ENCODE measurements at regions of chr16 and their contacts with region 1.

Region 1: DNA sequence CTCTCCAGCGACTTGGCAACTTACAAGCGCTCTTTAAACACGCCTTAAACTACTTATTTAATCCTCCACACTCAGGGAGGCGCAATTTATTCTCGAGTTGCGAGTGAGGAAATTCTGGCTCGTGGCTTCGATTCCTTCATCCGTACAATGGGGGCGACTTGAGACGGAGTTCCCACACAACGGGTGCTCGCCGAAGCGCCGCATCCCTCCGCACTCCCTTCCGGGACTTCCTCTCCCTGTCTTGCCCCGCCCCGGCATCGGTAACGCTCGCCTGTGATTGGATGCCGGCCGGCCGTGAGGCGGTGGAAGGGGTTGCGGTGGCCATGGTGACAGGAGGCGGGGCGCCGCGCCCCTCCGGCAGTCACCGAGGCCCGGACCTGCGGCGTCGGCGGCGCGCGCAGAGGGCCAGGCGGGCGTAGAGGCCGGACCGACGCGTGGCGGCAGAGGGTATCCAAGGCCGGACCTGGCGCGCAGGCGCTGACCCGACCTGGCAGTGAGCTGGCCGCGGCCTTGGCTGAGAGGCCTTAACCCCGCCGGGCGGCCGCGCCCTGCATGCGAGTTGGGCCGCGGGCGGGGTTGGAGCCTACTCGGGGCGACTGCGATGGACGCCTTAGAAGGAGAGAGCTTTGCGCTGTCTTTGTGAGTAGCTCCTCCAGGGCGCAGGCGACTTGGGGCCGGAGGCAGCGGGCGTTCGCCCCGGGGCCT is at the start of gene ARL2BP:
- DNase-seq: peak; percentile 94 to 98 (median 95)
- H3K4me3 ChIP-seq: peak within 1 kb of the TSS; percentile 49 to 60
- H3K4me3 Mint-ChIP-seq: peak within 1 kb of the TSS; percentile 91 to 98 (median 95)
- H3K27ac ChIP-seq: peak within 1 kb of the TSS; percentile 78
- H3K27ac Mint-ChIP-seq: peak within 1 kb of the TSS; percentile 93 to 99 (median 98)
- H3K4me1 ChIP-seq: peaks cover 17% of the 10 kb centered on the region
- H3K4me1 Mint-ChIP-seq: peaks cover 13 to 21% (median 18%) of the 10 kb centered on the region in 4 donors
- H3K27me3 ChIP-seq: no peaks in the 10 kb centered on the region
- H3K27me3 Mint-ChIP-seq: no peaks in the 10 kb centered on the region
- total RNA-seq, gene ARL2BP: 48.0 to 49.1 TPM

Region 2: GRCh38 chr16:57084257-57084770 is 160.6 kb before region 1 on chr16:
- CTCF ChIA-PET with region 1: no interaction called
- POLR2A ChIA-PET with region 1: no interaction called
- intact Hi-C with region 1: no loop called
- DNase-seq: peak; percentile 78 to 81 (median 79)
- H3K4me3 ChIP-seq: no peak overlapping the region
- H3K4me3 Mint-ChIP-seq: peak overlapping the region in 1 of 8 donors; percentile 30
- H3K27ac ChIP-seq: peak overlapping the region; percentile 29
- H3K27ac Mint-ChIP-seq: peak overlapping the region; percentile 85 to 95 (median 91)
- H3K4me1 ChIP-seq: peaks cover 10% of the 10 kb centered on the region
- H3K4me1 Mint-ChIP-seq: peaks cover 5 to 18% (median 11%) of the 10 kb centered on the region in 4 donors
- H3K27me3 ChIP-seq: no peaks in the 10 kb centered on the region
- H3K27me3 Mint-ChIP-seq: no peaks in the 10 kb centered on the region

Region 3: DNA sequence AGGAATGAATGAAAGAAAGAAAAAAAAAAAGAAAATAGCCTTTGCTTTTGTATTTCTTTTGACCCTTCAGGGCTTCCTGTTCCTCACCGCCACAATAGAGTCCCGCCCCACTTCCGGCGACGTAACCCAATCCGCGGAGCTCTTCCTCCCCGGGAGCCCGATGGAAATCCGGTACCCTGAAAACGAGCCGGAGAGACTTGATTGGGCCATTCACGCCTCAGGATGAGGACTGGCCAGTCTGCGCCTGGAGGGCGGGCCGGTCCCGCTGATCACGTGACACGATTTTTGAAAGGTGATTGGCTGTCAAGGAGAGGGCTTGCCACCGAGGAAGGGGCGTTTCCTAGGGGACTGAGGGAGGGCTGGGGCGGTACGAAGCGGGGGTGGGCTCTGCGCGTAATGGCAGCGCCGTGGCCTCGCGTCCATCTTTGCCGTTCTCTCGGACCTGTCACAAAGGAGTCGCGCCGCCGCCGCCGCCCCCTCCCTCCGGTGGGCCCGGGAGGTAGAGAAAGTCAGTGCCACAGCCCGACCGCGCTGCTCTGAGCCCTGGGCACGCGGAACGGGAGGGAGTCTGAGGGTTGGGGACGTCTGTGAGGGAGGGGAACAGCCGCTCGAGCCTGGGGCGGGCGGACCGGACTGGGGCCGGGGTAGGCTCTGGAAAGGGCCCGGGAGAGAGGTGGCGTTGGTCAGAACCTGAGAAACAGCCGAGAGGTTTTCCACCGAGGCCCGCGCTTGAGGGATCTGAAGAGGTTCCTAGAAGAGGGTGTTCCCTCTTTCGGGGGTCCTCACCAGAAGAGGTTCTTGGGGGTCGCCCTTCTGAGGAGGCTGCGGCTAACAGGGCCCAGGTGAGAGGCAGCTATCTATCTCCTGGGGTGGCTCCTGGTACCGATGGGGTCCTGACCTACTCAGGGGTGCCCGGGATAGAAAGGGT is 58.7 kb before region 1 on chr16 and contains the starts of genes PSME3IP1 and RSPRY1:
- CTCF ChIA-PET with region 1: interaction called, 3 read pairs
- POLR2A ChIA-PET with region 1: interaction called, 10 read pairs
- intact Hi-C with region 1: loop called (anchors 1 kb)
- DNase-seq: peak; percentile 99 to 100 (median 100)
- H3K4me3 ChIP-seq: peak within 1 kb of the TSS; percentile 88
- H3K4me3 Mint-ChIP-seq: peak within 1 kb of the TSS; percentile 97 to 99 (median 99)
- H3K27ac ChIP-seq: peak within 1 kb of the TSS; percentile 87
- H3K27ac Mint-ChIP-seq: peak within 1 kb of the TSS; percentile 95 to 99 (median 97)
- H3K4me1 ChIP-seq: peaks cover 45% of the 10 kb centered on the region
- H3K4me1 Mint-ChIP-seq: peaks cover 36 to 60% (median 48%) of the 10 kb centered on the region in 4 donors
- H3K27me3 ChIP-seq: no peaks in the 10 kb centered on the region
- H3K27me3 Mint-ChIP-seq: no peaks in the 10 kb centered on the region
- total RNA-seq, gene PSME3IP1: 147 to 157 TPM
- total RNA-seq, gene RSPRY1: 32.8 to 38.0 TPM

Region 4: DNA sequence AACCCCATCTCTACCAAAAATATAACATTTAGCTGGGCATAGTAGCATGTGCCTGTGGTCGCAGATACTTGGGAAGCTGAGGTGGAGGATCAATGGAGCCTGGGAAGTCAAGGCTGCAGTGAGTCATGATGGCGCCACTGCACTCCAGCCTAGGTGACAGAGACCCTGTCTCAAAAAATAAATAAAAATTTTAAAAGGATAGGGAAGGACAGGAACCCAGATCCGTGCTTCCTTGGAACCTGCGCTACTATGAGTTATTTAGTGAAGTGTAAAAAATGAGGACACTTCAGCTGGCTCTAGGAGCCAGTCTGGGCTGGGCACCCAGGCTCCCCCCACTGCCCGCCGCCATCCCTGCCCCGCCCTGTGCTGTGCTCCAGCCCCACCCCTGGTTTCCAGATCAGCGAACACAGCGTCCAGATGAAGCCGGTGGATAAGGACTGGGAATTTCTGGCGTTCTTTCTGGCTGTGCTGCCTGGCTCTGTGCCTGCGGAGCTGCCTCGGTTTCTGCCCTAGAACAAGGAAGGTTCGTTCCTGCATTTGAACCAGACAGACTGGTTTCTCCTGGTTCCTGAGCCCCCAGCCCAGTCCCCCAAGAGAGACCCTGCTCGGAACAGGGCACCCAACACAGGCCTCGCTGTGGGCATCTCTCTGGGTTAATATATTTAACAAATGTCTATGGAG is 21.1 kb after region 1 on chr16:
- CTCF ChIA-PET with region 1: no interaction called
- POLR2A ChIA-PET with region 1: interaction called, 3 read pairs
- intact Hi-C with region 1: loop called (anchors 1 kb)
- DNase-seq: no peak
- H3K4me3 ChIP-seq: no peak overlapping the region
- H3K4me3 Mint-ChIP-seq: peak overlapping the region; percentile 0 to 69 (median 24)
- H3K27ac ChIP-seq: peak overlapping the region; percentile 34
- H3K27ac Mint-ChIP-seq: peak overlapping the region; percentile 72 to 95 (median 86)
- H3K4me1 ChIP-seq: peaks cover 44% of the 10 kb centered on the region
- H3K4me1 Mint-ChIP-seq: peaks cover 20 to 42% (median 25%) of the 10 kb centered on the region in 4 donors
- H3K27me3 ChIP-seq: no peaks in the 10 kb centered on the region
- H3K27me3 Mint-ChIP-seq: no peaks in the 10 kb centered on the region

Region 5: DNA sequence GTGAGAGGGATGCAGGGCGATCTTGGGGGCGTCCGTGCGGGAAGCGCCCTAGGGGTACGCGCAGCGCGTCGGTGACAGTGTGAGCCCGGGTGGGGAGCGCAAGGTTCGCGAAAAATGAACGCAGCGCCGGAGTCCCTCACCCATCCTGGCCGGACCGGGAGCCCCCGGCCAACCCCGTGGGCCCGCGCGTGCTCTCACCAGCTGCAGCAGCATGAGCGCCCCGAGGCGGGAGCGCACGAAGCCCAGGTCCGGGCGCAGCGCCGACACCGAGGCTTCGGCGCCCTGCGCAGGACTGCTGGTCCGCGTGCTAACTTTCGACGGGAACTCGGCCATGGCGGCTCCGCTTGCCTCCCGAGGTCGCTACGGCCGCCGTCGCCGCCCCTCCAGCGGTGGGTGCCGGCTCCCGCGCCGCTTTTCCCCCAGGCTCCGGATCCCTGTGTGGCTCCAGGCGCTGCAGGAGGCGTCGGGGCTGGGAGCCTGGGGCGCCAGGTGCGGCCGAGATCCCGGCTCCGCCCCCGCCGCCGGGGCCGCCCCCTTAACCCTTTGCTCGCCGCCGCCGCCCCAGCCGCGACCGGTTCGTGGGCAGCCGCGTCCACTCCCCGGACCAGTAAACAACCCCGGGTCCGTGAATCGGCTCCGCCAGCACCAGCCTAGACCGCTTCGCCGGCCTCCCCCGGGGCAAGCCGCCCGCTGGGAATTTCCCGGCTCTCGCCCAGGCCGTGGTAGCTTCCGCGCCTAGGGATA is 39.5 kb after region 1 on chr16 and contains the start of gene PLLP:
- CTCF ChIA-PET with region 1: no interaction called
- POLR2A ChIA-PET with region 1: interaction called, 5 read pairs
- intact Hi-C with region 1: loop called (anchors 5 kb)
- DNase-seq: peak in 4 of 5 donors; percentile 27 to 48 (median 39)
- H3K4me3 ChIP-seq: peak within 1 kb of the TSS in 1 of 2 donors; percentile 54
- H3K4me3 Mint-ChIP-seq: peak within 1 kb of the TSS; percentile 65 to 84 (median 76)
- H3K27ac ChIP-seq: no peak within 1 kb of the TSS
- H3K27ac Mint-ChIP-seq: peak within 1 kb of the TSS in 4 of 7 donors; percentile 32 to 83 (median 64)
- H3K4me1 ChIP-seq: peaks cover 31% of the 10 kb centered on the region
- H3K4me1 Mint-ChIP-seq: peaks cover 14 to 40% (median 24%) of the 10 kb centered on the region in 4 donors
- H3K27me3 ChIP-seq: no peaks in the 10 kb centered on the region
- H3K27me3 Mint-ChIP-seq: peaks cover 7% of the 10 kb centered on the region in 2 donors
- total RNA-seq, gene PLLP: 1.6 to 2.4 TPM

Region 6: GRCh38 chr16:57422026-57422944 is 177.4 kb after region 1 on chr16:
- CTCF ChIA-PET with region 1: interaction called, 12 read pairs
- POLR2A ChIA-PET with region 1: interaction called, 8 read pairs
- intact Hi-C with region 1: no loop called
- DNase-seq: no peak
- H3K4me3 ChIP-seq: no peak overlapping the region
- H3K4me3 Mint-ChIP-seq: no peak overlapping the region
- H3K27ac ChIP-seq: no peak overlapping the region
- H3K27ac Mint-ChIP-seq: peak overlapping the region in 1 of 7 donors; percentile 53
- H3K4me1 ChIP-seq: peaks cover 5% of the 10 kb centered on the region
- H3K4me1 Mint-ChIP-seq: peaks cover 5 to 16% (median 10%) of the 10 kb centered on the region in 4 donors
- H3K27me3 ChIP-seq: no peaks in the 10 kb centered on the region
- H3K27me3 Mint-ChIP-seq: no peaks in the 10 kb centered on the region